ENCODE measurements at regions of chr15 and their contacts with region 1.

Region 1: GRCh38 chr15:40108855-40109735 is at the start of gene BMF:
- DNase-seq: peak; percentile 99
- ATAC-seq: peak; percentile 81
- H3K4me3 ChIP-seq: peak within 1 kb of the TSS; percentile 61 to 64
- H3K27ac ChIP-seq: peak within 1 kb of the TSS; percentile 59
- H3K4me1 ChIP-seq: peaks cover 42 to 51% of the 10 kb centered on the region in 2 experiments
- H3K27me3 ChIP-seq: no peaks in the 10 kb centered on the region
- CTCF ChIP-seq: peak in 2 of 3 experiments; percentile 21 to 38; a peak in 3 of 6 replicates
- POLR2A ChIP-seq: no peak
- RAD21 ChIP-seq: no peak
- total RNA-seq, gene BMF: 1.0 TPM

Region 2: GRCh38 chr15:40044717-40045571 is 64.2 kb before region 1 on chr15:
- CTCF ChIA-PET with region 1: interaction called, 8 read pairs
- POLR2A ChIA-PET with region 1: interaction called, 4 read pairs
- RAD21 ChIA-PET with region 1: interaction called, 4 to 12 read pairs
- intact Hi-C with region 1: loop called (anchors 2 kb)
- DNase-seq: peak; percentile 46
- ATAC-seq: peak; percentile 100
- H3K4me3 ChIP-seq: peak overlapping the region; percentile 14 to 21
- H3K27ac ChIP-seq: no peak overlapping the region
- H3K4me1 ChIP-seq: peaks cover 21 to 43% of the 10 kb centered on the region in 2 experiments
- H3K27me3 ChIP-seq: no peaks in the 10 kb centered on the region
- CTCF ChIP-seq: peak; percentile 84 to 97 (median 96)
- POLR2A ChIP-seq: no peak
- RAD21 ChIP-seq: peak; percentile 98

Region 3: DNA sequence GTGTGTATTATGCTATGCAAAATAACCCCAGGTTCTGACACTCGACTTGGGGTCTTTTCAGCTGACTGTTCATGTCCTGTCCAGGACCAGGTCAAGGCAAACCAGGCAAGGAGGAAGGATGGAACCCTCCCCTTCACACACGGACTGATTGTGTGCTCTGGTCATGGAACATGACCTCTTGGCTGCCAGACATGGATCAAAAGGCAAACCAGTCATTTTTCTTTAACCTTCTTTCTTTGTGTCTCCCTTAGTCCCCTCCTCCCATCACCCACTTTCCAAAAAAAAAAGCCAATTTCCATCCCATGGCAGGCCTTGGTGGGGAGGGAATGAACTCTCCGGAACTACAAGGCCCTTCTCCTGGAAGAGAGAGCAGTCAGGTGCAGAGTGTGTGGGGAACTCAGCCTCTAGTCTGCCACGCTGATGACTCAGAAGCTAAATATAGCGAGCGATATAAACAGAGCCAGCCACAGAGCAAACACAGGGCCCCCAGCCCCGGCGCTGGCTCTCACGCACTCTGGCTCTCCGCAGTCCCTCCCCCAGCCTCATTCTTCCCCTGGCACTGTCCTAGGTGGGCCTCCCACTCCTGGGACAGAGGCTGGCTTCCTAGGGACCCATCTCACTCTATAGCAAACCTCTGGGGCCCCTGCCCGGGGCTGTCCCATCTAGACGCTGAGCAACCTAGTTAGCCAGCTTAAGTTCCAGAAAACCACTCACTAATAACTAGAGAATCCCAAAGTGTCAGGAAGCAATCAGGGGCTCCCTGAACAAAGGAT is 10.4 kb before region 1 on chr15:
- CTCF ChIA-PET with region 1: interaction called, 34 read pairs
- POLR2A ChIA-PET with region 1: interaction called, 5 read pairs
- RAD21 ChIA-PET with region 1: no interaction called
- intact Hi-C with region 1: no loop called
- DNase-seq: no peak
- ATAC-seq: peak; percentile 83
- H3K4me3 ChIP-seq: peak overlapping the region; percentile 5 to 48
- H3K27ac ChIP-seq: peak overlapping the region; percentile 55
- H3K4me1 ChIP-seq: peaks cover 50 to 64% of the 10 kb centered on the region in 2 experiments
- H3K27me3 ChIP-seq: no peaks in the 10 kb centered on the region
- CTCF ChIP-seq: no peak
- POLR2A ChIP-seq: no peak
- RAD21 ChIP-seq: 0 out of 2 replicates have a peak, but pooled peaks have one; percentile 12

Region 4: GRCh38 chr15:40130799-40131502 is 21.9 kb after region 1 on chr15:
- CTCF ChIA-PET with region 1: no interaction called
- POLR2A ChIA-PET with region 1: no interaction called
- RAD21 ChIA-PET with region 1: no interaction called
- intact Hi-C with region 1: no loop called
- DNase-seq: no peak
- ATAC-seq: no peak
- H3K4me3 ChIP-seq: no peak overlapping the region
- H3K27ac ChIP-seq: no peak overlapping the region
- H3K4me1 ChIP-seq: no peaks in the 10 kb centered on the region
- H3K27me3 ChIP-seq: no peaks in the 10 kb centered on the region
- CTCF ChIP-seq: no peak
- POLR2A ChIP-seq: no peak
- RAD21 ChIP-seq: no peak

Region 5: GRCh38 chr15:40160689-40161688 is 51.9 kb after region 1 on chr15 and contains the start of gene BUB1B:
- CTCF ChIA-PET with region 1: interaction called, 5 read pairs
- POLR2A ChIA-PET with region 1: interaction called, 3 read pairs
- RAD21 ChIA-PET with region 1: no interaction called
- intact Hi-C with region 1: loop called (anchors 10 kb)
- DNase-seq: peak; percentile 85
- ATAC-seq: peak; percentile 93
- H3K4me3 ChIP-seq: peak within 1 kb of the TSS; percentile 76 to 85
- H3K27ac ChIP-seq: peak within 1 kb of the TSS; percentile 78
- H3K4me1 ChIP-seq: peaks cover 10 to 19% of the 10 kb centered on the region in 2 experiments; a peak in 3 of 4 replicates
- H3K27me3 ChIP-seq: no peaks in the 10 kb centered on the region
- CTCF ChIP-seq: no peak
- POLR2A ChIP-seq: peak; percentile 75
- RAD21 ChIP-seq: 0 out of 2 replicates have a peak, but pooled peaks have one; percentile 2
- total RNA-seq, gene BUB1B: 92.9 TPM